HepG2 (cell line): ENCODE measurements at regions of chr2 and their contacts with region 1.

Region 1: GRCh38 chr2:189412330-189412953 is 28.8 kb upstream of the WDR75 start:
- DNase-seq: peak; percentile 39
- ATAC-seq: peak; percentile 75
- H3K4me3 ChIP-seq: no peak overlapping the region
- H3K27ac ChIP-seq: no peak overlapping the region
- H3K4me1 ChIP-seq: no peaks in the 10 kb centered on the region
- H3K27me3 ChIP-seq: no peaks in the 10 kb centered on the region
- CTCF ChIP-seq: peak; percentile 80
- EP300 ChIP-seq: no peak
- POLR2A ChIP-seq: no peak
- RAD21 ChIP-seq: peak; percentile 68

Region 2: GRCh38 chr2:188524519-188525113 is 887.8 kb before region 1 on chr2:
- CTCF ChIA-PET with region 1: interaction called, 29 read pairs
- POLR2A ChIA-PET with region 1: no interaction called
- in situ Hi-C with region 1: loop called (anchors 5 kb)
- intact Hi-C with region 1: loop called (anchors 1 kb)
- DNase-seq: peak; percentile 53
- ATAC-seq: peak; percentile 62; the same call in 2 of the 3 replicates
- H3K4me3 ChIP-seq: no peak overlapping the region
- H3K27ac ChIP-seq: no peak overlapping the region
- H3K4me1 ChIP-seq: no peaks in the 10 kb centered on the region
- H3K27me3 ChIP-seq: no peaks in the 10 kb centered on the region
- CTCF ChIP-seq: peak; percentile 63
- EP300 ChIP-seq: no peak
- POLR2A ChIP-seq: no peak
- RAD21 ChIP-seq: no peak; the same call in 1 of the 2 replicates

Region 3: GRCh38 chr2:188978291-188979081 is 434.0 kb before region 1 on chr2:
- CTCF ChIA-PET with region 1: no interaction called
- POLR2A ChIA-PET with region 1: no interaction called
- in situ Hi-C with region 1: loop called (anchors 25 kb)
- intact Hi-C with region 1: loop called (anchors 1 kb)
- DNase-seq: peak; percentile 43
- ATAC-seq: peak; percentile 96
- H3K4me3 ChIP-seq: no peak overlapping the region
- H3K27ac ChIP-seq: no peak overlapping the region
- H3K4me1 ChIP-seq: no peaks in the 10 kb centered on the region
- H3K27me3 ChIP-seq: no peaks in the 10 kb centered on the region
- CTCF ChIP-seq: peak; percentile 66
- EP300 ChIP-seq: no peak
- POLR2A ChIP-seq: no peak
- RAD21 ChIP-seq: no peak

Region 4: DNA sequence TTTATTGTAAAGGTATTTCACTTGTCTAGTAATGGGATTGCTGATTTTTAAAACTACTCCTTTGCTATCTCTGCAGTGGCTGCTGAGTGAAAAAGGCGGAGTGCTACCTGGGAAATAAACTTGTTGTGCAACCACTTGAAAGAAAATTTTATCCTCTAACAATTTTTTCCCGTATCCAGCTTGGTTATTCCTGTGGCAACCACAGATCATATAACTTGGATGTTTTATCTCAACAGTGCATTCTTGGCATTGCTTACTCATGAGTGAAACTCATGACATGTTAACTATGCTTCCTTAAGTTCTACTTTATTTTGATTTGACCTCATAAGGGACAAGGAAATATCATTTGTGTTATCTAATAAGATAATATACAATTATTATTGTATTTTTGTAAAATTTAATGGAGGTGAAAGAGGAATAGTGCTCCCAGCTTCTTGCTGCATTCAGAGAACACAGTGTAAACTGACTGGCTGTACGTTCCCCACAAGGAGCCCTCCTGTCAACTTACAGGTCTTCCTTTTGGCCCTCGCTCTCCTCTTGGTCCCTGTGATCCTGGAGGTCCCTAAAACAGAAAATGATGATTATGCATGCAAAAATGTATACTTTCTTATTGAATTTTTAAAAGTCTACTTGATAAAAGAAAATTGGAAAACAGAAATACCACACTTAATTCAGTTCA is 315.5 kb before region 1 on chr2:
- CTCF ChIA-PET with region 1: interaction called, 11 read pairs
- POLR2A ChIA-PET with region 1: no interaction called
- in situ Hi-C with region 1: loop called (anchors 10 kb)
- intact Hi-C with region 1: loop called (anchors 1 kb)
- DNase-seq: peak; percentile 47
- ATAC-seq: no peak
- H3K4me3 ChIP-seq: no peak overlapping the region
- H3K27ac ChIP-seq: no peak overlapping the region
- H3K4me1 ChIP-seq: no peaks in the 10 kb centered on the region
- H3K27me3 ChIP-seq: no peaks in the 10 kb centered on the region
- CTCF ChIP-seq: no peak
- EP300 ChIP-seq: no peak
- POLR2A ChIP-seq: no peak
- RAD21 ChIP-seq: no peak

Region 5: DNA sequence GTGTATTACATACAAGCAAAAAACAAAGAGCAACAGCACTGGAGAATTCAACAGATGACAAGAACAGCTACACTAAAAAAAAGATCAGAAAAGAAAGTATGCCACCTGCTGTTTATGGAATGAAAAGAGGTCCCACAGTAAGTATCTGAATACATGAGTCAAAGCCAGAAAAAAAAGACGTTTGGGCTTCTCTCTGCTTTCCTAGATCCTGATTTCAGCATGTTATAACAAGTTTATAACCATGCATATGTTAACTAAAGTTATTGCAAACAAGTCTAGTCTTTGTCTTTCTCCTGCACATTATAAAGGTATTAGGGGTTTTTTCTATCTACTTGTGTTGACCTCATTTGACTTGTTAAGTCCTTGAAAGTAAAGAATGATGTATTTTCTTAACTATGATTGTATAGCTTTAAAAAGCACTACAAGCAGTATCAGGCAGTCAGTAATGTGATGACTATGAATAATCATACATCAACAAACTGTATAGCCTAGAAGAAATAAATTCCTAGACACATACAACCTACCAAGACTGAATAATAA is 124.4 kb before region 1 on chr2:
- CTCF ChIA-PET with region 1: no interaction called
- POLR2A ChIA-PET with region 1: no interaction called
- in situ Hi-C with region 1: no loop called
- intact Hi-C with region 1: loop called (anchors 1 kb)
- DNase-seq: peak; percentile 49
- ATAC-seq: peak; percentile 72
- H3K4me3 ChIP-seq: no peak overlapping the region
- H3K27ac ChIP-seq: no peak overlapping the region
- H3K4me1 ChIP-seq: no peaks in the 10 kb centered on the region
- H3K27me3 ChIP-seq: no peaks in the 10 kb centered on the region
- CTCF ChIP-seq: peak; percentile 59
- EP300 ChIP-seq: no peak
- POLR2A ChIP-seq: no peak
- RAD21 ChIP-seq: peak; percentile 36; the same call in 1 of the 2 replicates

Region 6: DNA sequence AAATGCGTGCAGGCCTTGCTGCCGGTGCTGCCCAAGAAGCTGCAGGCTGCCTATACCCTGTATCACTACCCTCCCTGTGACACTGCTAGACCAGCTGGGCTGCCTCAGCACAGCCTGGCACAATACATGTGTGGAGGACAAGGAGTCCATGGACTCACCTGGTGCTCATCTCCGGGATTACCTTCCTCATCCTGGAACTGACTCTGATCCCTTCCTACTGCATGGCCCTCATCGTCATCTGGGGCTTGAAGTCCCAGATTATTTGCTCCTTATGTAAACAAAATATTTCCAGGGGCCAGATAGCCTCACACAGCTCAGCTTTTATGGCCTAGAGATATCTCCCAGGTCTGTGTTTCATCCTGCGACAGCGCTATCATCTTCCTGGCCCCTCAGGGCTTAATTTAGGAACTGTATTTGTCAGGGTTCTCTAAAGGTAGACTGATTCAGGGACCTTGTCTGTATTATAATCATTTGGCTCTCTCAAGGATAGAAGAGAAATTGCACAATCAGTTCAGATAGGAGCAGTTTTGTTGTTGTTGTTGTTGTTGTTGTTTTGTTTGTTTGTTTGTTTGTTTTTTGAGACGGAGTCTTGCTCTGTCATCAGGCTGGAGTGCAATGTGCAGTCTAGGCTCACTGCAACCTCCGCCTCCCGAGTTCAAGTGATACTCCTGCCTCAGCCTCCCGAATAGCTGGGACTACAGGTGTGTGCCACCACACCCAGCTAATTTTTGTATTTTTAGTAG is 71.7 kb after region 1 on chr2:
- CTCF ChIA-PET with region 1: no interaction called
- POLR2A ChIA-PET with region 1: no interaction called
- in situ Hi-C with region 1: no loop called
- intact Hi-C with region 1: no loop called
- DNase-seq: no peak
- ATAC-seq: peak; percentile 75
- H3K4me3 ChIP-seq: no peak overlapping the region
- H3K27ac ChIP-seq: no peak overlapping the region
- H3K4me1 ChIP-seq: no peaks in the 10 kb centered on the region
- H3K27me3 ChIP-seq: no peaks in the 10 kb centered on the region
- CTCF ChIP-seq: no peak
- EP300 ChIP-seq: no peak
- POLR2A ChIP-seq: no peak
- RAD21 ChIP-seq: no peak